ENCODE measurements at regions of chr1 and their contacts with region 1.

Region 1: GRCh38 chr1:158095737-158096335 is 84.9 kb upstream of the CD1D start:
- DNase-seq: peak; percentile 41
- H3K4me3 ChIP-seq: no peak overlapping the region
- H3K27ac ChIP-seq: no peak overlapping the region
- H3K4me1 ChIP-seq: no peaks in the 10 kb centered on the region
- H3K27me3 ChIP-seq: no peaks in the 10 kb centered on the region
- CTCF ChIP-seq: peak; percentile 81 to 82
- POLR2A ChIP-seq: no peak

Region 2: DNA sequence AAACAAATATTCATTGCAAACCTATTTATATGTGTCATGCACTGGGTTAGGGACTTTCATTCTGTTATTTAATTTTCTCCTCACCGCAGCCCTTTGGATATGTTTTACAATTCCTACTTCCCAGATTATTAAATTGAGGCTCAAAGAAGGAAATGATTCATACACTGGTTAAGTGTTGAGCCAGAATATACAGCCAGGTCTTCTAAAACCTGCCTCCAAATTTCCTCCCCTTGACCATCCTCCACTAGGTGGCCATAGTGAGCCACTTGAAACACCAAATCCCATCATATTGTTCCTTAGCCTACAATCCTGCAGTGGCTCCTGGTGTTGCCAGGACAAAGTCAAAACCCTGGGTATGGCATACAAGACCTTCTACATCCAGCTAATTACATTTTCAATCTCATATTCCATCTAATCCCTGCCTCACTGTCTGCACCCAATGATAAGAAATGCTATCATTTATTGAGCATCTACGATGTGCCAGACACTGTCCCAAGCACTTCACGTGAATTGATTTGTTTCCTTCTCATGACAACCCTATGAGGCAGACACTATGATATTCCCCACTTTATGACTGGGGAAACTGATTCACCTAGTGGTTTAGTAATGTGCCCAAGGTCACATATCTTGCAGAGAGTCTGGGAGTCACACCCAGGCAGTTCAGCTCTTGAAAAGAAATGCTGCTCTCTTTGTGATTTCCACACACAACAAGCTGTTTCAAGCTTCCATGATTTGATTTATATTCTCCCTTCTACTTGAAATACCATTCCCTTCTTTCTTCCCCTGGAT is 125.9 kb before region 1 on chr1:
- CTCF ChIA-PET with region 1: interaction called, 23 read pairs
- POLR2A ChIA-PET with region 1: no interaction called
- dilution Hi-C with region 1: no loop called
- intact Hi-C with region 1: no loop called
- DNase-seq: peak; percentile 90
- H3K4me3 ChIP-seq: no peak overlapping the region
- H3K27ac ChIP-seq: peak overlapping the region; percentile 10
- H3K4me1 ChIP-seq: peaks cover 17% of the 10 kb centered on the region
- H3K27me3 ChIP-seq: peaks cover 2 to 4% of the 10 kb centered on the region in 2 experiments
- CTCF ChIP-seq: peak; percentile 75 to 90
- POLR2A ChIP-seq: no peak

Region 3: DNA sequence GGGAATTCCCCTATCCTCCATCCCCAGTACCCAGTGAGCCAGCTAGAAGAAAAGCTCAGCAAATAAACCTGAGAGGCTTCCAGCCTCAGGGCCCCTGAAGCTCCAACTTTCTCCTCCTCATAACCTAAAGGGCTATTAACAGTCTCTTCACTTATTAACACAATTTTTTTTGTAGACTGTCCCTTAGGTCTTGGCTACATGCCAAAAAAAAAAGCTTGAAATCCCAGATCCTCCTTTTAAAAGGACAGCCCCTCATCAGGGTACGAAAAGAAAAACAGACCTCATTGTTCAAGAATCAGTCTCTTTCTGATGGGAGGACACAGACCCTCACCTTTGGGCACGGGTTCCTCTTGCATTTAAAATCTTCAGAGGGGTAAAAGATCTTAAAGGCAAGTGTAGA is 12.1 kb after region 1 on chr1:
- CTCF ChIA-PET with region 1: interaction called, 28 read pairs
- POLR2A ChIA-PET with region 1: no interaction called
- dilution Hi-C with region 1: no loop called
- intact Hi-C with region 1: loop called (anchors 1 kb)
- DNase-seq: no peak
- H3K4me3 ChIP-seq: no peak overlapping the region
- H3K27ac ChIP-seq: no peak overlapping the region
- H3K4me1 ChIP-seq: peaks cover under 1% of the 10 kb centered on the region
- H3K27me3 ChIP-seq: peaks cover 35 to 39% of the 10 kb centered on the region in 2 experiments
- CTCF ChIP-seq: no peak
- POLR2A ChIP-seq: no peak

Region 4: DNA sequence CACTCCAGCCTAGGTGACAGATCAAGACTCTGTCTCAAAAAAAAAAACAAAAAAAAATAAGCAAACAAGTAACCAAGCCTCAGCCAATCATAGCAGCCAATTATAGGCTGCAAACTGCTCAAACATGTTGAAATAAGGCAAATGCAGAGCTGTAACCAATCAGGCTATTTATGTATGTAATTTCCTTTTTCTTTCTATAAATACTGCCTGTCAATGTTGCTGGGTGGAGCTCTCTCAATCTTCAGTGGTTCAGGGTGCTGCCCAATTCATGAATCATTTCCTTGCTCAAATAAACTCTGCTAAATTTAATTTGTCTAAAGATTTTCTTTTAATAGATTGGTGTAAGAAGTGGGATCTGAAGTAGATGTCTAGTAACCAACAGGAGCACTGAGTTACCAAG is 73.3 kb after region 1 on chr1:
- CTCF ChIA-PET with region 1: no interaction called
- POLR2A ChIA-PET with region 1: no interaction called
- dilution Hi-C with region 1: no loop called
- intact Hi-C with region 1: no loop called
- DNase-seq: no peak
- H3K4me3 ChIP-seq: no peak overlapping the region
- H3K27ac ChIP-seq: no peak overlapping the region
- H3K4me1 ChIP-seq: no peaks in the 10 kb centered on the region
- H3K27me3 ChIP-seq: peaks cover 3 to 4% of the 10 kb centered on the region in 2 experiments
- CTCF ChIP-seq: no peak
- POLR2A ChIP-seq: no peak